ENCODE measurements at regions of chr1 and their contacts with region 1.

Region 1: GRCh38 chr1:50332941-50333594 is 90.2 kb downstream of the DMRTA2 start:
- DNase-seq: no peak
- H3K4me3 ChIP-seq: peak overlapping the region; percentile 51
- CTCF ChIP-seq: peak; percentile 79

Region 2: GRCh38 chr1:50322579-50322978 is 10.5 kb before region 1 on chr1:
- CTCF ChIA-PET with region 1: interaction called, 16 read pairs
- POLR2A ChIA-PET with region 1: no interaction called
- DNase-seq: no peak
- H3K4me3 ChIP-seq: no peak overlapping the region
- CTCF ChIP-seq: no peak

Region 3: GRCh38 chr1:50343323-50343722 is 10.3 kb after region 1 on chr1:
- CTCF ChIA-PET with region 1: interaction called, 39 read pairs
- POLR2A ChIA-PET with region 1: no interaction called
- DNase-seq: no peak
- H3K4me3 ChIP-seq: no peak overlapping the region
- CTCF ChIP-seq: no peak

Region 4: DNA sequence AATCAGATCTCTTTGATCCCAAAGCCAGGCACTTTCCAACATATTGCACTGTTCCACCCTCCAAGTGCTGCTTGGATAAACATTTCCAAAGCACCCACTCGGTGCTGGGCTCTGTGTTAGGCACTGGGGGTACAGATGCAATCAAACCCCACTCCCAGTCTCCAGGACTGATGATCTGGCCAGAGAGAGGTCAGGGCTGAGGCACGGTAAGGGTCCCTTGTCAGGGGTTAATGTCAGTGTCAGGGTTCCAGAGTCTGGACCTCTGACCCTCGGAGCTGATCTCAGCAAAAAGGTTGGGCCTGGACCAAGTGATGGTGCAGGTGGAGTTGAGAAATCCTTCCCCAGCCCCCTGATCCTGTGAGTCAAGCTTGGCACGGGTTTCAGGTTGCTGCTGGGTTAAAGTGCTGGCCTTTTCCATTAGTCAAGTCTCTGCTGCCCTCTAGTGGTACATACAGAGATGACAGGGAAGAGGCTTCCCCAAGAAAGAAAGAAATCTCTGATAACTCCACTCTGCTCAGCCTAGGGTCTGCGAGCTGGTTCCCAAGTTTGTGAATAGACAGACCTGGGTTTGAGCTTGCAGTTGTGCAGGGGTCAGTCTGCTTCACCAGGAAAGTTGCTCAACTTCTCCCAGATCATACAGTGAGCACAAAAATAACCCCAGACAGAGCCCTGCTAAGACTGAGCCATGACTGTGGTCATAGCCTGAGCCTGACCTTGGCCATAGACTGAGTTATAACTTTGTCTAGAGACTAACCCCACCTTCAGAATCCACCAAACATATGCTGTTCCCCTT is 15.6 kb after region 1 on chr1:
- CTCF ChIA-PET with region 1: interaction called, 39 read pairs
- POLR2A ChIA-PET with region 1: no interaction called
- DNase-seq: peak; percentile 42
- H3K4me3 ChIP-seq: no peak overlapping the region
- CTCF ChIP-seq: peak; percentile 72

Region 5: GRCh38 chr1:50441183-50441582 is 108.1 kb after region 1 on chr1:
- CTCF ChIA-PET with region 1: no interaction called
- POLR2A ChIA-PET with region 1: no interaction called
- DNase-seq: no peak
- H3K4me3 ChIP-seq: no peak overlapping the region
- CTCF ChIP-seq: no peak

Region 6: DNA sequence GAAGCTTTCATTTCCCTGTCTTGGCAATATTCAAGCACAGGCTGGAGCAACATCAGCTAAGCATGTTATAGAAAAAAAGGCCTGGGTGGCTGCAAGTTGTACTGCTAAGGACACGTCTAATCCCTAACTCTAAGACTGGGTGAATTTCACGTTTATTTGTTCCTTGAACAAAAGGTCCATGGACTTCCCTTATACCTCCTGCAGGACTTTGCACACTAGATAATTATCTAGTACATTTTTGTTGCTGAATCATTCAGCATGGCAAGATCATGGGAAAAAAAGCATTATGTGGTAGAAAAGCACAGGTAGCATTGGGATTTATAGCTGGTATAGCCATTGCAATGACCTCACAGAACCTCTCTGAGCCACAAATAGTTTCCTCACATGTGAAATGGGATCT is 220.9 kb after region 1 on chr1:
- CTCF ChIA-PET with region 1: no interaction called
- POLR2A ChIA-PET with region 1: no interaction called
- DNase-seq: no peak
- H3K4me3 ChIP-seq: no peak overlapping the region
- CTCF ChIP-seq: no peak